ENCODE measurements at regions of chr9 and their contacts with region 1.

Region 1: DNA sequence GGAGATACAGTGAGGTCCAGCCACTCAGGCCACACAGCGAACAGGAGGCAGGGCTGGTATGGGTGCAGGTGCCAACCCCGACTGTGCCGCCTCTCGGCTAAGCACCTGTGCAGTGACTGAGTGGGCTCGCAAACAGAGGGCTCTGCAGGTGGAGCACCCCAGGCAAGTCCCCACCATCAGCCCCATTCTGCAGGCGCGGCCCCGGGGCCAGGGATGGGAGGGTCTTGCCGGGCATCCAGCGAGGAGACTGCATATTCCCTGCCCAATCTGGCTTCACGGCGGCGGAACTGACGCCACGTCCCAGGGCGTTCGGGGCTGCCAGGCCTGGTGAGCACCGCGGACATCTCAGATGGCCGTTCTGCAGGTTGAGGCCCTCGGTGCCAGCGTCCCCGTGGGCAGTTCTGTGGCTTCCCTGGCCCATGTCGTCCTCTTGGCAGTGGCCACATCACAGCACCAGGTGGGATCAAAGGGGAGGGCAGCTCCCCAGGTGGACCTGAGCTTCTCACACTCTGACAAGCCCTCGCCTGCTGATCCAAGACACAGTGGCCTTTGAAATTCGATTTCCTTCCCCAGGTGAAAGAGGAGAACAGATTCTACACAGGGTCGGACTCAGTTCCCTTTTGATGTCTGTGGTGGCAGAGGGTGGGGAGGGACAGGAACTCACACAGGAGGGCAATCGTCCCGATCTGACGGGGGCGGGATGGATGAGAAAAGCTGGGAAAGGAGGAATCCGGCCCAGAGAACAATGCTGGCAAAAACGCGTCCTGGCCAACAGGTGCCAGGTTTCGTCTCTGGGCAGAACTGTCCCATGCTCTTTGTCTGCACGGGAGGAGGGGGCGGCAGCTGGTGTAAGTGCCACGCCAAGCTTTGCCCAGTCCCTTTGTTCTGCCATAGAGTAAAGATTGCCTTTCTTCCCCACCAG is 18.8 kb downstream of the DBH start:
- DNase-seq: no peak
- H3K4me3 ChIP-seq: no peak overlapping the region
- H3K27ac ChIP-seq: no peak overlapping the region
- H3K4me1 ChIP-seq: peaks cover 0 to 15% (median 8%) of the 10 kb centered on the region in 4 experiments; a peak in 5 of 7 replicates
- H3K27me3 ChIP-seq: peaks cover 0 to 11% (median 10%) of the 10 kb centered on the region in 4 experiments; a peak in 3 of 7 replicates
- CTCF ChIP-seq: no peak
- EP300 ChIP-seq: no peak
- POLR2A ChIP-seq: no peak
- RAD21 ChIP-seq: no peak

Region 2: GRCh38 chr9:133640580-133641395 is 14.2 kb before region 1 on chr9:
- CTCF ChIA-PET with region 1: interaction called, 14 read pairs
- POLR2A ChIA-PET with region 1: interaction called, 7 read pairs
- DNase-seq: no peak
- H3K4me3 ChIP-seq: no peak overlapping the region
- H3K27ac ChIP-seq: no peak overlapping the region
- H3K4me1 ChIP-seq: peaks cover 0 to 10% (median 7%) of the 10 kb centered on the region in 4 experiments; a peak in 6 of 7 replicates
- H3K27me3 ChIP-seq: no peaks in the 10 kb centered on the region; a peak in 1 of 7 replicates
- CTCF ChIP-seq: no peak
- EP300 ChIP-seq: no peak
- POLR2A ChIP-seq: no peak
- RAD21 ChIP-seq: no peak

Region 3: GRCh38 chr9:133897648-133898047 is 242.7 kb after region 1 on chr9:
- CTCF ChIA-PET with region 1: no interaction called
- POLR2A ChIA-PET with region 1: no interaction called
- DNase-seq: no peak
- H3K4me3 ChIP-seq: no peak overlapping the region
- H3K27ac ChIP-seq: no peak overlapping the region
- H3K4me1 ChIP-seq: peaks cover 0 to 12% (median under 1%) of the 10 kb centered on the region in 4 experiments; a peak in 3 of 7 replicates
- H3K27me3 ChIP-seq: no peaks in the 10 kb centered on the region
- CTCF ChIP-seq: no peak
- EP300 ChIP-seq: no peak
- POLR2A ChIP-seq: no peak
- RAD21 ChIP-seq: no peak